GM10248 (cell line): ENCODE measurements at regions of chr1 and their contacts with region 1.

Region 1: GRCh38 chr1:150484861-150485260 is 2.4 kb upstream of the TARS2 start:
- DNase-seq: no peak
- CTCF ChIP-seq: no peak

Region 2: GRCh38 chr1:150515328-150516048 is 30.6 kb after region 1 on chr1 and contains the start of gene FALEC:
- CTCF ChIA-PET with region 1: no interaction called
- POLR2A ChIA-PET with region 1: no interaction called
- DNase-seq: peak; percentile 99
- CTCF ChIP-seq: no peak

Region 3: DNA sequence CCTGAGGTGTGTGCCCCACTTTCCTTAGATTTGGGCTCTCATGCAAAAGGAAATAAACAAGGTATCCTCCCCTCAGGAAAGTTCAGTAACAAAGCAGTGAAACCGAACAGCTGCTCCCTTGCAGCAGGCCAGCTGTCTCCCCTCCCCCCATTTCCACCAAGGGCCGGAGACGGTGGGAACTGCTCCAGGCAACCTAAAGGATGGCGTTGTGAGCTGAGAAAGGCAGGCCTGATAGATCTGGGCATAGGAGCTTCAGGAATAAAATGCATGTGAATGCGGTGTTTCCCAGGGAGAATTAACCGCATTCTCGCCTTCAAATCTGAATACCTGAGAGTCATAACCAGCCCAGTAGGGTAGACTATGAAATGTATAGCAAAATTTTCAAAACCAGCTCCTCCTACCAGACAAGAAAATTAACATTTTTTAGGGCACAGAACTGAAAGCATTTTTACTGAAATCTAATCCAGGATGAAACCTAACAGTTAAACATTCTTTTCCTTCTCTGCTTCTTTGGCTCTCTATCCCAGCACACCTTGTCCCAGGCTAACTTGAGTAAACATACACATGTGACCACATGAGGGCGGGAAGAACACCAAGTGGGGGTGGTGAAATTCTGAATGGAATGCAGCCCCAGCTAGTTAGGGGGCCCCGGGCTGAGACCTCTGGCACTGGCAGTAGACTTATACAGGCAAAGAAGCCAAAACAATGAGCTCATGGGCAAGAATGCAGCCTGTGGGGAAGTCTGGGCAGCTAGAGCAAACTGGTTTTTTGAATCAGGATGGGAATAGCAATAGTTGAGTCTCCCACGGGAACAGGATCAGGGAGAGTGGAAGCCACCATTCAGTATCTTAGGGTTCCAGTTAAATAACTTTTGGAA is 83.1 kb after region 1 on chr1:
- CTCF ChIA-PET with region 1: no interaction called
- POLR2A ChIA-PET with region 1: interaction called, 10 read pairs
- DNase-seq: peak; percentile 18
- CTCF ChIP-seq: no peak